ENCODE measurements at regions of chr2 and their contacts with region 1.

Region 1: DNA sequence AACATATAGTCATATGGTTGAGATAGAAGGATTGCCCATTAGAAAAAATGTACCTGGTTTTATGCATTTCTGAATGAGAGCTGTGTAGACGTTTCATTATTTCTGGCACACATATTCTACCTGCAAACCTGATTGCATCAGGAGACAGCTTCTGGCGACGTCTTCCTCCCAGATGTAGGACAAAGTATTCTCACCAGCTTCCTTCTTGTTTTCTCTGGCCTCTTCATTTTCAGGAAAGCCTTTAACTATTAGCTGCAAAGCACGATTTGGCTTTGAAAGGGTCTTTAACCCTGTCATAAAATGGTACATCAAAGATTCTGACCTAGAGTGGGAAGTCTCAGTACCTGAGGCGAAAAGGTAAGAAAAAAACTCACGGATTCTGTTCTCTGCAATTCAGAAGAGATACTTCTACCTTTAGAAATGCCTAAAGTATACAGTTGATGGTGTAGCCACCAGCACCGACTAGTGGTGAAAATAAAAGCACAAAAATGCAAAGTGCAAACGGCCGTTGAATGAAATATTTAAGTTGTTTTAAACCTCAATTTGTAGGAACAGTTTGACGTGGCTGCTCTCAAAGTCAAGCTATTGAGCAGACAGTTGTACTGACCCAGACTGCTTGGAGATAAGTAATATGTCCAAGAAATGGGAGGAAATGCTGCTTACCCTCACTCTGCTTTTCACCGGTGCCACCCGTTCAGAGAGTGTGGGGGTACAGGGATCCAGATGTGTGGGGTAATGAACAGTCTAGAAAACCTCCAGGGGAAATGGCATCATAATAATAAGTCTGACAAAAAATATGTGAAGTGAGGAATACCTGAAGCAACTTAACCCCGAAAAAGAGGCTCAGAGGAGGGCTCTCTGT is 20.2 kb downstream of the IL18RAP start:
- DNase-seq: no peak
- H3K4me3 ChIP-seq: no peak overlapping the region
- H3K27ac ChIP-seq: peak overlapping the region in 7 of 8 donors; percentile 23 to 84 (median 54)
- H3K4me1 ChIP-seq: peaks cover 0 to 30% (median 6%) of the 10 kb centered on the region in 6 donors
- H3K27me3 ChIP-seq: no peaks in the 10 kb centered on the region
- CTCF ChIP-seq: peak; percentile 47 to 85 (median 77)
- POLR2A ChIP-seq: no peak

Region 2: GRCh38 chr2:102005989-102006885 is 437.0 kb before region 1 on chr2:
- intact Hi-C with region 1: loop called (anchors 10 kb)
- DNase-seq: no peak
- H3K4me3 ChIP-seq: peak overlapping the region in 1 of 8 donors; percentile 22
- H3K27ac ChIP-seq: peak overlapping the region in 2 of 8 donors; percentile 40 to 42
- H3K4me1 ChIP-seq: peaks cover 10 to 73% (median 21%) of the 10 kb centered on the region in 6 donors
- H3K27me3 ChIP-seq: no peaks in the 10 kb centered on the region
- CTCF ChIP-seq: peak in 10 of 11 experiments; percentile 17 to 76 (median 65)
- POLR2A ChIP-seq: no peak

Region 3: DNA sequence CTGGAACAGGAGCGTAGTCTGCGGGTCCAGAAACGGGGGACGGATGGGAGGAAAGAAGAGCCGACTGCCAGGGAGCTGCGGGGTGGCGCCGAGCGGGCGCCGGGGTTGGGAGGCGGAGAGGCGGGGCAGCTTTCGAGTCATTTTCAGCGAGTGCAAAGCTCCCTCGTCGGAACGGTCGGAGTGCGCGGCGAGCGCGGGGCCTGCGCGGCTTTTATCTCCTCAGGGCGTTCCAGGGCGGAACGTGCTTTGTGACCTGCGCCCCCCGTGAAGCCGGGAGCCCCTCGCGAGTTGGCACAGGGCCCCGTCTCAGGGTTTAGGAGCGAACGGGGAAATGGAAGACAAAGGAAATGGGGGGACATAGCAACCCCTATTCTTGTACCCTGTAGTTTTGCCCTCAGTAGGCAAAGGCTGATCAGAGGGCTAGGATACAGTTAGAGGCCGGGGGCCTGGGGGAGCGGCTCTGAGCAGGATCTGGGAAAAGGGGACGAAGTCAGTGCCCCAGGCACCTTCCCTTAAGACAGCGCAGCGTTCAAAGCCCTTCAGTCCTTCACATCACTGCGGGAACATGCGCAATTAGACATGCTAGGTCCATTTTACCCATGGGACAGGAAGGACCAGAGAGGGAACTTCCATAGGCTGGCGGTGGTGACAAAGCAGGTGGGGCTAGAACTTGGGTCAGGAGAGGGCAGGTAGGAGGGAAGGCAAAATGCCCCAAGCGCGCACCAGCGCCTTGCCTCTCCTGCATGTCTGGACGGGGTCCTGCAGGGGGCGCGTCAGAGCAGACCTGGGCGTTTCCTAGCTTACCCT is 192.0 kb before region 1 on chr2:
- intact Hi-C with region 1: loop called (anchors 2 kb)
- DNase-seq: peak; percentile 95
- H3K4me3 ChIP-seq: peak overlapping the region; percentile 12 to 65 (median 34)
- H3K27ac ChIP-seq: peak overlapping the region in 5 of 8 donors; percentile 42 to 89 (median 73)
- H3K4me1 ChIP-seq: peaks cover 0 to 46% (median 23%) of the 10 kb centered on the region in 6 donors
- H3K27me3 ChIP-seq: peaks cover 0 to 47% (median 0%) of the 10 kb centered on the region in 7 donors
- CTCF ChIP-seq: peak; percentile 59 to 94 (median 78)
- POLR2A ChIP-seq: no peak